ENCODE measurements at regions of chr12 and their contacts with region 1.

Region 1: DNA sequence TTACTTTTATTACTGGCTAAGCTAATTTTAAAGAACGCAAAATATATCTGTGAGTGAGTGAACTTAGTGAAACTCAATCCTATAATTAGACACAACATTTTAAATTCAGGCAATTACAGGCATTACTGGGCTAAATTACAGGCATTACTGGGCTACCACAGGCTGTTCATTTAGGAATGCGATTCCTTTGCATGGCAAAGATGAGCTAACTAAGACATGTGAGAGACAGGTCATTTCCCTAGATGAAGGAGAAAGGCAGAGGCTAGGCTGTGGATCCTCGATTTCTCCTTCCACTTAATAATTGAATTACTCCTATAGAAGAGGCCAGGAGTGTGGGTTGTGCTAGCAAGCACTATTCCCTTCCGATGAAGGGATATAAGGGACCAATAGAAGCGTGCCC is 429.4 kb upstream of the LMO3 start:
- DNase-seq: no peak
- ATAC-seq: no peak

Region 2: DNA sequence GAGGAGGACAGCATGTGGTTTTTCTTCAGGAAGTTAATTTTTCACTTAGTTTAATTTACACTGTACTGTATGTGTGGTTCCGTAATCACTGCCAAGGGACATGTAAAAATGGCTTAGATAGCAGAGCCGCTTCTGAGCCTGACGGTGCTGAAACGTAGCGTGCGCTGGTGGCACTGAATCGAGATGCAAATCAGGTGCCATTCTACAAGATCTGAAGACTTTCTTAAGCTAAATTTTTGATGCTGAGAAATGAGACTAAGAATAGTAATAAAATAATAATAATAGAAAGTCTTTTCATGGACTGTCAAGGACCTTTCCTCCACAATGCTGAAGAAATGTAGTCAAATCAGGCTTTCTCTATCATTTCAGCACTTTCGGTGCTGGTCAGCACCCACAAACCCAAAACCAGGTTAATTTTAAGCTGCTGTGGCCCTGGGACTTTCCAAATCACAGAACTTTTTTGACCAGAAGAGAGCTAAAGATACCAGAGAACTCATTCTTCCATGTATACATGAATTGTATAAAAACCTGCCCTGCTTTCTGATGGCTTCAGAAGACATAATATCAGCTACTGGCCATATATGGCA is 246.1 kb before region 1 on chr12:
- intact Hi-C with region 1: no loop called
- DNase-seq: no peak
- ATAC-seq: no peak

Region 3: DNA sequence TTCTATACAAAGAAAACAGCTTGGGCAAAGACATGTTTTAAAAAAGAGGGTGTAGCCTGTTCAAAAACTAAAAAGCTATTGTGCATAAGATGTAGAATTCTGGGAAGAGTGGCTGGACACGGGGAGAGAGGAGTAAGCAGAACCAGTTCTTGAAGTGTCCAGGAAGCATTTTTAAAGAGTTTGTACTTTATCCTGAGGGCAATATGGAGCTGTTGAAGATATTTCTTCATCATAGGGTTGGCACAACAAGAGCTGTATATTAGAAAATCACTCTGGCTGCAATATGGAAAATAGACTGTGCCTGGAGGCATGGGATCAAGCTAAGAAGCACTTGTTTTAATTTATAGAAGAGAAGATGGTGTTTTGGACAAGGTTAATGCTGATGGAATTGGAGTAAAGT is 29.5 kb after region 1 on chr12:
- intact Hi-C with region 1: loop called (anchors 1 kb)
- DNase-seq: no peak
- ATAC-seq: no peak

Region 4: DNA sequence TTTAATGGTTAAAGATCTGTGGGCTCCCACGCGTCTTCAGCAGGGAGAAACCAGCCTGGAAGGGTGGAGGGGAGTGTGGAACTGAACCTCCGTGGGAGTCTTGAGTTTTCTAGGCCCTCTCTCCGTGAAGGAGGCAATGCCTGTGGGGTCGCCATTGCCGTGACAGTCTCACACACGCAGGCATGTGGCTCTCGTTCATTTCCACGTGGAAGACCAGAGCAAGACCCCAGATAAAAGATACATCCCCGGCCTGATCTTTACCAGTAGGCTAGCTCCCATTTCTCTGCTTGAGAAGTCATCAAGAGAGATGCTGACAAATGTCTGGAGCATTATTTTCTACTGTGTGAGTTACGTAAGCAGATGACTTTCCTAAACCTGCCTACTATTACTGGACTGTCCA is 62.3 kb after region 1 on chr12:
- intact Hi-C with region 1: no loop called
- DNase-seq: no peak
- ATAC-seq: no peak